ENCODE measurements at regions of chr4 and their contacts with region 1.

Region 1: GRCh38 chr4:4524364-4524763 is 17.5 kb downstream of the STX18 start:
- DNase-seq: peak; percentile 83
- ATAC-seq: peak; percentile 100
- H3K4me3 Mint-ChIP-seq: peak overlapping the region; percentile 45
- H3K27ac Mint-ChIP-seq: peak overlapping the region; percentile 68
- H3K4me1 Mint-ChIP-seq: peaks cover 20% of the 10 kb centered on the region
- H3K27me3 Mint-ChIP-seq: no peaks in the 10 kb centered on the region

Region 2: GRCh38 chr4:4541661-4542570 is 17.6 kb after region 1 on chr4 and contains the start of gene STX18:
- CTCF ChIA-PET with region 1: interaction called, 20 read pairs
- DNase-seq: peak; percentile 89
- ATAC-seq: peak; percentile 97
- H3K4me3 Mint-ChIP-seq: peak within 1 kb of the TSS; percentile 90
- H3K27ac Mint-ChIP-seq: peak within 1 kb of the TSS; percentile 96
- H3K4me1 Mint-ChIP-seq: peaks cover 51% of the 10 kb centered on the region
- H3K27me3 Mint-ChIP-seq: no peaks in the 10 kb centered on the region
- total RNA-seq, gene STX18: 25.6 to 26.5 TPM

Region 3: GRCh38 chr4:4555916-4556315 is 31.6 kb after region 1 on chr4:
- CTCF ChIA-PET with region 1: no interaction called
- DNase-seq: no peak
- ATAC-seq: no peak
- H3K4me3 Mint-ChIP-seq: no peak overlapping the region
- H3K27ac Mint-ChIP-seq: no peak overlapping the region
- H3K4me1 Mint-ChIP-seq: peaks cover 7% of the 10 kb centered on the region
- H3K27me3 Mint-ChIP-seq: no peaks in the 10 kb centered on the region

Measured in activated CD8-positive, alpha-beta memory T cell treated with anti-CD3 and anti-CD28 coated beads, Interleukin-2, amount 10 ng/mL, durations not matched to agents 7 days and 5 days (primary cell).